Naive thymus-derived CD4-positive, alpha-beta T cell (primary cell): ENCODE measurements at regions of chr7 and their contacts with region 1.

Region 1: GRCh38 chr7:111486472-111487142 is 75.7 kb downstream of the IMMP2L start:
- DNase-seq: peak in 5 of 9 donors; percentile 12 to 33 (median 29)
- ATAC-seq: no peak
- H3K4me3 ChIP-seq: no peak overlapping the region
- H3K4me3 Mint-ChIP-seq: no peak overlapping the region
- H3K27ac ChIP-seq: no peak overlapping the region
- H3K27ac Mint-ChIP-seq: no peak overlapping the region
- H3K4me1 ChIP-seq: no peaks in the 10 kb centered on the region
- H3K4me1 Mint-ChIP-seq: peaks cover 0 to 3% (median 0%) of the 10 kb centered on the region in 7 donors
- H3K27me3 ChIP-seq: no peaks in the 10 kb centered on the region
- H3K27me3 Mint-ChIP-seq: no peaks in the 10 kb centered on the region

Region 2: DNA sequence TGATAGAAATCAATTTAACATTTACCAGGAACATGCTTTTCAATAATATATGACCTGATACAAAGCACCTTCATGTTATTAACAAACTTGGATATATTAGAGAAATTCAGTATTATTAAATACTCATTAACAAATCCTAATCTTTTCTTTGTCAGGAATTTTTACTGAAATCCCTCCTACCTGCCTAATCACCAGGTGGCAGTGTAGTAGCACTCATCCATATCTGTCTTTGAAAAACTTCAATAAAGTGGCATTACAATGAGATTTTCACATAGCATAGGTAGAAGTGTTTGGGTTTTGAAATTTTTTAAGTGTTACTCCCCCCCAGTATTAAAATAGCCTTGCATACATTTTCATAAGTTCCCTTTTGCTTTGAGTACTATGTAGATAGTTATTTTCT is 1642.2 kb before region 1 on chr7:
- CTCF ChIA-PET with region 1: interaction called, 5 read pairs
- POLR2A ChIA-PET with region 1: no interaction called
- intact Hi-C with region 1: loop called (anchors 1 kb)
- DNase-seq: peak in 4 of 9 donors; percentile 3 to 25 (median 6)
- ATAC-seq: no peak
- H3K4me3 ChIP-seq: no peak overlapping the region
- H3K4me3 Mint-ChIP-seq: no peak overlapping the region
- H3K27ac ChIP-seq: no peak overlapping the region
- H3K27ac Mint-ChIP-seq: no peak overlapping the region
- H3K4me1 ChIP-seq: no peaks in the 10 kb centered on the region
- H3K4me1 Mint-ChIP-seq: no peaks in the 10 kb centered on the region
- H3K27me3 ChIP-seq: no peaks in the 10 kb centered on the region
- H3K27me3 Mint-ChIP-seq: peaks cover 0 to 18% (median under 1%) of the 10 kb centered on the region in 5 donors

Region 3: GRCh38 chr7:110090110-110090769 is 1396.4 kb before region 1 on chr7:
- CTCF ChIA-PET with region 1: no interaction called
- POLR2A ChIA-PET with region 1: no interaction called
- intact Hi-C with region 1: loop called in 1 of 2 experiments (anchors 1 kb)
- DNase-seq: peak in 6 of 9 donors; percentile 11 to 28 (median 15)
- ATAC-seq: no peak
- H3K4me3 ChIP-seq: no peak overlapping the region
- H3K4me3 Mint-ChIP-seq: no peak overlapping the region
- H3K27ac ChIP-seq: no peak overlapping the region
- H3K27ac Mint-ChIP-seq: no peak overlapping the region
- H3K4me1 ChIP-seq: no peaks in the 10 kb centered on the region
- H3K4me1 Mint-ChIP-seq: no peaks in the 10 kb centered on the region
- H3K27me3 ChIP-seq: no peaks in the 10 kb centered on the region
- H3K27me3 Mint-ChIP-seq: peaks cover 0 to 10% (median 3%) of the 10 kb centered on the region in 5 donors

Region 4: GRCh38 chr7:110595690-110596325 is 890.8 kb before region 1 on chr7:
- CTCF ChIA-PET with region 1: no interaction called
- POLR2A ChIA-PET with region 1: no interaction called
- intact Hi-C with region 1: loop called (anchors 1 to 2 kb)
- DNase-seq: peak in 5 of 9 donors; percentile 16 to 39 (median 21)
- ATAC-seq: no peak
- H3K4me3 ChIP-seq: no peak overlapping the region
- H3K4me3 Mint-ChIP-seq: no peak overlapping the region
- H3K27ac ChIP-seq: no peak overlapping the region
- H3K27ac Mint-ChIP-seq: no peak overlapping the region
- H3K4me1 ChIP-seq: no peaks in the 10 kb centered on the region
- H3K4me1 Mint-ChIP-seq: peaks cover 0 to 15% (median 0%) of the 10 kb centered on the region in 7 donors
- H3K27me3 ChIP-seq: no peaks in the 10 kb centered on the region
- H3K27me3 Mint-ChIP-seq: peaks cover 0 to 11% (median 0%) of the 10 kb centered on the region in 5 donors

Region 5: DNA sequence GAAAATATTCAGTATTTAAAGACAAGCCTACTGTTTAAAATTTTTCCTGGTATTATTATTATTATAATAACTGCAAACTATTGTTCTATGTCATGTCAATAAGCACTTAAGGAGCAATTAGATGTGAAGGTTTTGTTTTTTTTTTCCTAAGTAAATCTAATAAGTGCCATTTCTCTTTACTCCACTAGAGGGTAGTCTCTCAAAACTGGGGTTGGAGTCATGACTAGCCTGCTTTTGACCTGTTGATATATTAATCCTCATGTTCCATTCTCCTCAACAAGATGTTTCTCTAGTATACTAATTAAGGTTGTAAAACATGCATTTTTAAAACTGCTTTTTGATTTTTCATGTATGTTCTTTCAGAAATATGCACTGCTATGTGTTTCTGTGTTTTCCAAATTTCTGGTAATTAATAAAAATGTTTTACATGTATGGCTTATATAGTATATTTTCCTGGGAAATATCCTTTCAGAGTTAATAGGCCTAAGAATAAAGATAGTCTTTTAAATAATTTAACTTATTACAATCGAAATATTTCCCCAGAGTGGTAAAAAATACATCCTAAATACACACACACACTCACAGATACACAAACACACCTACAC is 396.7 kb before region 1 on chr7:
- CTCF ChIA-PET with region 1: no interaction called
- POLR2A ChIA-PET with region 1: no interaction called
- intact Hi-C with region 1: loop called (anchors 2 to 5 kb)
- DNase-seq: peak in 4 of 9 donors; percentile 43 to 50 (median 47)
- ATAC-seq: peak; percentile 70
- H3K4me3 ChIP-seq: peak overlapping the region; percentile 58
- H3K4me3 Mint-ChIP-seq: peak overlapping the region; percentile 84 to 99 (median 98)
- H3K27ac ChIP-seq: no peak overlapping the region
- H3K27ac Mint-ChIP-seq: peak overlapping the region in 5 of 9 donors; percentile 25 to 97 (median 93)
- H3K4me1 ChIP-seq: peaks cover under 1 to 13% of the 10 kb centered on the region in 2 donors
- H3K4me1 Mint-ChIP-seq: peaks cover 6 to 77% (median 60%) of the 10 kb centered on the region in 7 donors
- H3K27me3 ChIP-seq: no peaks in the 10 kb centered on the region
- H3K27me3 Mint-ChIP-seq: no peaks in the 10 kb centered on the region